ENCODE measurements at regions of chr20 and their contacts with region 1.

Region 1: GRCh38 chr20:740141-740540 is 28.2 kb downstream of the SLC52A3 start:
- H3K4me3 ChIP-seq: no peak overlapping the region
- H3K27ac ChIP-seq: no peak overlapping the region
- H3K4me1 ChIP-seq: no peaks in the 10 kb centered on the region
- CTCF ChIP-seq: no peak

Region 2: GRCh38 chr20:549722-550496 is 190.2 kb before region 1 on chr20:
- CTCF ChIA-PET with region 1: interaction called, 16 read pairs
- POLR2A ChIA-PET with region 1: no interaction called
- H3K4me3 ChIP-seq: no peak overlapping the region
- H3K27ac ChIP-seq: no peak overlapping the region
- H3K4me1 ChIP-seq: no peaks in the 10 kb centered on the region
- CTCF ChIP-seq: no peak

Region 3: DNA sequence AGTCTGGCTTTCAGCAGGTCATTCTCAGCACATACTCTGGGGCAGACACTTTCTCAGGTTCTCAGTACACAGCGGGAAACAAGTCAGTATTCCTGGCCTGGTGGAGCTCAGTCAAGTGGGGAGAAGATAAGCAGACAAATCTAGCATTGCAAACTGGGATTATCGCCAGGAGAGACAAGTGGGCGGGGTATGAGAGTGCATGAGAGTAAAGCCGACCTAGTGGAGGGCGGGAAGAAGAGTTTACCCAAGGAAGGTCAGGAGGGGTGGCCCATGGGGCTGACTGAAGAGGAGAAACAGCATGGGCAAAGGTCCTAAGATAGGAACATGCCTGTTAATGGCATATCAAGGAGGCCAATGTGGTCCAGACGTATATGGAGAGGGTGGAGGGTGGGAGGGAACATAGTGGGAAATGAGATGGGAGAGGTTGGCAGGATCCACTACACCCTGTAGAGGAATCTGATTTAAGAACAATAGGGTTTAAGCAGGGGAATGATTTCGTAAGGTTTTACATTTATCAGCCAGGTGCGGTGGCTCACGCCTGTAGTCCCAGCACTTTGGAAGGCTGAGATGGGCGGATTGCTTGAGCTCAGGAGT is 184.1 kb before region 1 on chr20:
- CTCF ChIA-PET with region 1: interaction called, 48 read pairs
- POLR2A ChIA-PET with region 1: no interaction called
- H3K4me3 ChIP-seq: no peak overlapping the region
- H3K27ac ChIP-seq: no peak overlapping the region
- H3K4me1 ChIP-seq: peaks cover 6% of the 10 kb centered on the region
- CTCF ChIP-seq: no peak

Region 4: DNA sequence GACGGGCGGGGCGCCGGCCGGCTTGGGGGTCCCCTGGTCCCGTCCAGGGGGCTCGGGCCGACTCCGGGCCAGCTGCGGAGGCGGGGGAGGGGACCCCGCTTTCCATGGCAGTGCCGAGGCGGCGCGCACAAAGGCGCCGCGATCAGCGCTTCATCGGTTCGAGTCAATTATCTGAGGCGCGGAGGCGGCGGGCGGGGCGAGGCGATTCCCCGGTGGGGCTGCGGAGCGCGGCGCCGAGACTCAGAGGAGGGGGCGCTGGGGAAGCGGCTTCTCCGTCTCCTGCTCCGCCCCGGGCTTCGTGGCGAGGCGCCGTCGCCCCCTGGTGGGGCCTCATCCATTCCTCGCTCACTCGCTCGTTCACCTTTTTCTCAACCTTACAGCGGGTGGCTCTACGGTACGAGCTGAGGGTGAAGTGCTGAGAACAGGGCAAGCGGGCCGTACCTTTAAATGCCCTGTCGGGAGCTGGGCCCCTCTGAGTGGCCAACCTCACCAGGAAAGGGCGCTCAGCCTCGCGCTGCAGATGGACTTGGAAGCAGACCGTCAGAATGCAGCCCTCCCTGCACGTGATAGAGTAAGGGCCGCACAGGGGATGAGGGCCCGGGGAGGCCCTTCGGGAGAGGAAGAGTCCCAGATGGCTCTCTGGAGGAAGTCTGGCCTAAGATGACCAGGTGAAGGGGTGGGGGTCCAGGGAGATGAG is 11.7 kb before region 1 on chr20:
- CTCF ChIA-PET with region 1: interaction called, 14 read pairs
- POLR2A ChIA-PET with region 1: no interaction called
- H3K4me3 ChIP-seq: peak overlapping the region; percentile 30
- H3K27ac ChIP-seq: no peak overlapping the region
- H3K4me1 ChIP-seq: no peaks in the 10 kb centered on the region
- CTCF ChIP-seq: peak; percentile 96

Region 5: GRCh38 chr20:750801-751200 is 10.7 kb after region 1 on chr20:
- CTCF ChIA-PET with region 1: interaction called, 23 read pairs
- POLR2A ChIA-PET with region 1: no interaction called
- H3K4me3 ChIP-seq: no peak overlapping the region
- H3K27ac ChIP-seq: no peak overlapping the region
- H3K4me1 ChIP-seq: no peaks in the 10 kb centered on the region
- CTCF ChIP-seq: no peak